GM12878 (cell line): ENCODE measurements at regions of chr1 and their contacts with region 1.

Region 1: GRCh38 chr1:78019018-78019417 is 14.3 kb downstream of the DNAJB4 start:
- DNase-seq: no peak
- ATAC-seq: peak; percentile 22; the same call in 2 of the 3 replicates
- H3K4me3 ChIP-seq: no peak overlapping the region
- H3K27ac ChIP-seq: no peak overlapping the region
- H3K4me1 ChIP-seq: no peaks in the 10 kb centered on the region
- H3K27me3 ChIP-seq: no peaks in the 10 kb centered on the region
- CTCF ChIP-seq: no peak
- EP300 ChIP-seq: no peak
- POLR2A ChIP-seq: no peak
- RAD21 ChIP-seq: no peak

Region 2: DNA sequence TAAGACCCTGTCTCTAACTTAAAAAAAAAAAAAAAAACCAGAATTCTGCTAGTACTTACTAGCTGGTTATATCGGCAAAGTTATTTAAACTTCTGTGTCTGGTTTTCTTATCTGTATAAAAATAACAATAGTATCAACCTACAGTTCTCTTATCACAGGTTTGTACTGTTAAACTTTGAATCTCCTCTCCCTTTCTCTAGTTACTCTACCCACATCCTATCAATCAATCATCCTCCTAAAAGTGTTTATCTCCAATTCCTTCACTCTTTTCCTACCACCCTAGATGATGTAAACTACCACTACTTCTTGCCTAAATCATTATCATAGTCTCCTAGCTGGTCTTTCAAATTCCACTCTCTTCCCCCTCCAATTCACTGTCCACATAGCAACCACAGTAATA is 286.9 kb before region 1 on chr1:
- CTCF ChIA-PET with region 1: no interaction called
- POLR2A ChIA-PET with region 1: no interaction called
- RAD21 ChIA-PET with region 1: no interaction called
- SMC1A ChIA-PET with region 1: no interaction called
- in situ Hi-C with region 1: no loop called
- intact Hi-C with region 1: no loop called
- DNase-seq: no peak
- ATAC-seq: no peak
- H3K4me3 ChIP-seq: no peak overlapping the region
- H3K27ac ChIP-seq: no peak overlapping the region
- H3K4me1 ChIP-seq: no peaks in the 10 kb centered on the region
- H3K27me3 ChIP-seq: no peaks in the 10 kb centered on the region
- CTCF ChIP-seq: no peak
- EP300 ChIP-seq: no peak
- POLR2A ChIP-seq: no peak
- RAD21 ChIP-seq: no peak

Region 3: GRCh38 chr1:77866296-77866695 is 152.7 kb before region 1 on chr1:
- CTCF ChIA-PET with region 1: no interaction called
- POLR2A ChIA-PET with region 1: no interaction called
- RAD21 ChIA-PET with region 1: no interaction called
- SMC1A ChIA-PET with region 1: no interaction called
- in situ Hi-C with region 1: no loop called
- intact Hi-C with region 1: no loop called
- DNase-seq: no peak
- ATAC-seq: no peak
- H3K4me3 ChIP-seq: no peak overlapping the region
- H3K27ac ChIP-seq: no peak overlapping the region
- H3K4me1 ChIP-seq: no peaks in the 10 kb centered on the region
- H3K27me3 ChIP-seq: no peaks in the 10 kb centered on the region
- CTCF ChIP-seq: no peak
- EP300 ChIP-seq: no peak
- POLR2A ChIP-seq: no peak
- RAD21 ChIP-seq: no peak

Region 4: GRCh38 chr1:78055565-78056132 is 36.6 kb after region 1 on chr1:
- CTCF ChIA-PET with region 1: no interaction called
- POLR2A ChIA-PET with region 1: no interaction called
- RAD21 ChIA-PET with region 1: no interaction called
- SMC1A ChIA-PET with region 1: no interaction called
- in situ Hi-C with region 1: no loop called
- intact Hi-C with region 1: loop called (anchors 5 kb)
- DNase-seq: no peak
- ATAC-seq: no peak
- H3K4me3 ChIP-seq: no peak overlapping the region
- H3K27ac ChIP-seq: no peak overlapping the region
- H3K4me1 ChIP-seq: no peaks in the 10 kb centered on the region
- H3K27me3 ChIP-seq: no peaks in the 10 kb centered on the region; a peak in 1 of 4 replicates
- CTCF ChIP-seq: no peak
- EP300 ChIP-seq: no peak
- POLR2A ChIP-seq: no peak
- RAD21 ChIP-seq: no peak